ENCODE measurements at regions of chr2 and their contacts with region 1.

Region 1: DNA sequence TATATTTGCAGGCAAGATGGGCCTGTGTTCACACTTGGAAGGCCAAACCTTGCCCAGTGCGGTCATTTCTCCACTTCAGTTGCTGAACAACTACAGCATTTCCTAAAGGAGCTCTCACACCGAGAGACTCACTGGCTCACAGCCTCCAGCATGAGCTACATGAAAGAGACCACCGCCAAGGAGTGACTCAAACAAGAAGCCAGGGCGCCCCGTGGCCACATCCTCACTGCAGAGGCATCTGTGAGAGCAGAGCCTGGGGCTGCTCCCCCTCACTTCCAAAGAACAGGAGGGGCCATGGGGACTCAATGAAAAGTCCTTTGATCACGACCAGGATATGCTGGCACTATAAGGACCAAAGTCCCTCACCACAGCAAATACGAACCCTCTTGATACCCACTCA is 50.0 kb downstream of the TMEM163 start:
- DNase-seq: peak; percentile 53 to 92 (median 88)
- ATAC-seq: peak; percentile 85
- H3K4me3 ChIP-seq: peak overlapping the region; percentile 4
- H3K4me3 Mint-ChIP-seq: peak overlapping the region; percentile 62 to 82 (median 68)
- H3K27ac ChIP-seq: no peak overlapping the region
- H3K27ac Mint-ChIP-seq: peak overlapping the region; percentile 74 to 96 (median 89)
- H3K4me1 ChIP-seq: peaks cover 54 to 61% of the 10 kb centered on the region in 2 donors
- H3K4me1 Mint-ChIP-seq: peaks cover 60 to 87% (median 72%) of the 10 kb centered on the region in 7 donors
- H3K27me3 ChIP-seq: no peaks in the 10 kb centered on the region
- H3K27me3 Mint-ChIP-seq: peaks cover 0 to 37% (median 4%) of the 10 kb centered on the region in 5 donors

Region 2: GRCh38 chr2:134679745-134680144 is 10.9 kb after region 1 on chr2:
- CTCF ChIA-PET with region 1: interaction called, 5 read pairs
- POLR2A ChIA-PET with region 1: interaction called, 25 read pairs
- intact Hi-C with region 1: loop called (anchors 1 kb)
- DNase-seq: peak in 7 of 9 donors; percentile 45 to 66 (median 60)
- ATAC-seq: peak; percentile 88
- H3K4me3 ChIP-seq: peak overlapping the region; percentile 42
- H3K4me3 Mint-ChIP-seq: peak overlapping the region; percentile 26 to 81 (median 62)
- H3K27ac ChIP-seq: no peak overlapping the region
- H3K27ac Mint-ChIP-seq: peak overlapping the region in 7 of 9 donors; percentile 13 to 81 (median 38)
- H3K4me1 ChIP-seq: peaks cover 35 to 42% of the 10 kb centered on the region in 2 donors
- H3K4me1 Mint-ChIP-seq: peaks cover 38 to 64% (median 54%) of the 10 kb centered on the region in 7 donors
- H3K27me3 ChIP-seq: no peaks in the 10 kb centered on the region
- H3K27me3 Mint-ChIP-seq: peaks cover 0 to 12% (median 4%) of the 10 kb centered on the region in 5 donors

Region 3: DNA sequence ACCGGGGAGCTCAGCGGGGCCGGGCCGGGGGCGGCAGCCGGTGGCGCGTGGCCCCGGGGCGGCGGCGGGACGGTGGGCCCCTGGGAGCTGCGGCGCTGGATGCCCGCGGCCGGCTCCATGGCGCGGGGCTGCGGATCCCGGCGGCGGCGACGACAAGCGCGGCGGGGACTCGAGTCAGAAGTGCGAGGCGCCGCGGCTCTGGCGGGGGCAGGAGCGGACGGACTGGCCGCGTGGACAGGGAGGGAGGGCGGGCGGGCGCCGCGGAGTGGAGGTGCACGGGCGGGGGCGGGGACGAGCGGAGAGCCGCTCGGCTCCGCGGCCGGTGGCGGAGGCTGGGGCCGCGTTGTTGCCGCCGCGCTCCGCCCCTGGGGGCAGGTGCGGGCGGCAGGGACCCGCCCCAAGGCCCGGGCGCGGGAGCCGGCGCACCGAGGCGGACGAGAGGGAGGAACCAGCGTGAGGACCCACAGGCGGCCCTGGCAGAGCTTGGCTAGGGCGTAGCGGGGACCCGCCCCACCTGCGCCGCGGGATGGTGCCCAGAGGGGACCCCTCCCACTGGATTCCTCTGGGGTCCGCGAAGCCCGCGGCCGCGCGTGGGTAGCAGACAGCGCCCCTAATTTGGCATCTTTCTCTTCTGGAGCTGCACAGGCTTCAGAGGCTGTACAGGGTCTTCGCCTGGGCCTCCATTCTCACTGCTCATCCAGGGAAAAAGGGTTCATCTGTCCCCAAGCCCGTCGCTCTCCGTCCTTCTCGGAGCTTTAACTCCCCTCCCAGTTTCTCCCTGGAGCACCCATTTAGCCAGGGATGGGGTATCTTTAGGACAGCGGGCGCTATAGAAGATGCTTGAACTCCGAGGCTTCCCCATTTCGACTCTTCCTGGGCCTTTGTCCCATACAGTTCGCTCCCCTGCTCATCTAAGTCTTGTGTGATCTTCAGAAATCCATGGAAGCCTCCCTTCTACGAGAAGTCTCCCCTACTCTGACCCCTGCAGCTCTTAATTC is 50.3 kb after region 1 on chr2 and contains the start of gene TMEM163:
- CTCF ChIA-PET with region 1: no interaction called
- POLR2A ChIA-PET with region 1: no interaction called
- intact Hi-C with region 1: loop called (anchors 5 kb)
- DNase-seq: peak in 4 of 9 donors; percentile 16 to 35 (median 20)
- ATAC-seq: peak; percentile 63
- H3K4me3 ChIP-seq: peak within 1 kb of the TSS; percentile 26
- H3K4me3 Mint-ChIP-seq: peak within 1 kb of the TSS; percentile 70 to 87 (median 80)
- H3K27ac ChIP-seq: no peak within 1 kb of the TSS
- H3K27ac Mint-ChIP-seq: no peak within 1 kb of the TSS
- H3K4me1 ChIP-seq: no peaks in the 10 kb centered on the region
- H3K4me1 Mint-ChIP-seq: peaks cover 17 to 30% (median 24%) of the 10 kb centered on the region in 7 donors
- H3K27me3 ChIP-seq: peaks cover 0 to 6% of the 10 kb centered on the region in 2 donors
- H3K27me3 Mint-ChIP-seq: peaks cover 63 to 78% (median 71%) of the 10 kb centered on the region in 5 donors
- total RNA-seq, gene TMEM163: 0.21 to 0.71 (median 0.39) TPM in 3 of 5 experiments, not detected in the others

Region 4: DNA sequence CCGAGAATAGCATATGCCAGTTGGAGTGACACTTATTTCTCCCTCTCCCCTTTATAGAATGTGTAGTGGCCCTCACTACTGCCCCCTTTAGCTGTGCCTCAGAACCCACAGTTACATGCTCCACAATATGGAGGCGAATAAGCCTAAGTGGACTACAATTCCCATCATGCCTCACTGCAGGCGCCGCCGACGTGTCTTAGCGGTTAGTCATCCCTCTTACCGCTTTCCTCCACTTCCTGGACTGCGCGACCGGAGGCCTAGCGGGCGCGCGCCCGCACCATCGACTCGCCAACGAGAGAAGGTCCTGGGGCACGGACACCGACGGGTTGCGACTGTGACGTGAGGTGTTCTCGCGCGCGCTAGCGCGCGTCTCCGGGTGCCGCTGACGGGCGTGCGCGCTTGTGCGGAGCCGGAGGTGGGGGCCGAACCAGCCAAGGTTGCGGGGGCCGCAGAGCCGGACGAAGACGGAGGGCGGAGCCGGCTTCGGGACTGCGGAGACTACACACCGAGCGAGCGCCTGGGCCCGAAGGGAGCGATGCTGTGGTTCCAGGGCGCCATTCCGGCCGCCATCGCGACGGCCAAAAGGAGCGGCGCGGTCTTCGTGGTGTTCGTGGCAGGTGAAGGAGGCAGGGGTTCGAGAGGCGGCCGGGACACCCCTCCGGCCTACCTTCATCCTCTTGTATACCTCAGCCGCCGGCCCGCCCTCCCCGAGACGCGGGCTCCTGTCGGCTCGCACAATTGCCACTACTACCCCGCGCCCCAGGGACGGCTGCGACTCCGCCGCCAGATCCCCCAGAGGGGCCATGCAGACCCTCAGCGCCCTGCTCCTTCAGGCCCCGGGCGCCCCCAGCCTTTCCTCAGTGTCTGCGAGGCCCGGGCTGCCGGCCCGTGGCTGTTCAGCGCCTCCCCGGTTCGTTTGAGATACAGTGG is 1072.8 kb after region 1 on chr2 and contains the start of gene UBXN4:
- CTCF ChIA-PET with region 1: no interaction called
- POLR2A ChIA-PET with region 1: no interaction called
- intact Hi-C with region 1: loop called (anchors 10 kb)
- DNase-seq: peak; percentile 73 to 93 (median 88)
- ATAC-seq: peak; percentile 95
- H3K4me3 ChIP-seq: peak within 1 kb of the TSS; percentile 88
- H3K4me3 Mint-ChIP-seq: peak within 1 kb of the TSS; percentile 92 to 98 (median 95)
- H3K27ac ChIP-seq: peak within 1 kb of the TSS; percentile 97
- H3K27ac Mint-ChIP-seq: peak within 1 kb of the TSS; percentile 89 to 99 (median 95)
- H3K4me1 ChIP-seq: peaks cover 20 to 22% of the 10 kb centered on the region in 2 donors
- H3K4me1 Mint-ChIP-seq: peaks cover 24 to 47% (median 43%) of the 10 kb centered on the region in 7 donors
- H3K27me3 ChIP-seq: no peaks in the 10 kb centered on the region
- H3K27me3 Mint-ChIP-seq: no peaks in the 10 kb centered on the region
- total RNA-seq, gene UBXN4: 115 to 158 (median 145) TPM